AG04449 (cell line): ENCODE measurements at regions of chr2 and their contacts with region 1.

Region 1: GRCh38 chr2:239143858-239144718 is 256.7 kb downstream of the HDAC4 start:
- DNase-seq: no peak
- H3K4me3 ChIP-seq: no peak overlapping the region
- CTCF ChIP-seq: peak; percentile 84

Region 2: GRCh38 chr2:239025096-239025801 is 118.8 kb before region 1 on chr2:
- CTCF ChIA-PET with region 1: no interaction called
- POLR2A ChIA-PET with region 1: no interaction called
- DNase-seq: peak; percentile 9
- H3K4me3 ChIP-seq: no peak overlapping the region
- CTCF ChIP-seq: no peak

Region 3: GRCh38 chr2:239098288-239098970 is 45.7 kb before region 1 on chr2:
- CTCF ChIA-PET with region 1: no interaction called
- POLR2A ChIA-PET with region 1: no interaction called
- DNase-seq: no peak
- H3K4me3 ChIP-seq: no peak overlapping the region
- CTCF ChIP-seq: no peak

Region 4: GRCh38 chr2:239131521-239131920 is 12.6 kb before region 1 on chr2:
- CTCF ChIA-PET with region 1: interaction called, 16 read pairs
- POLR2A ChIA-PET with region 1: no interaction called
- DNase-seq: no peak
- H3K4me3 ChIP-seq: no peak overlapping the region
- CTCF ChIP-seq: no peak

Region 5: GRCh38 chr2:239399111-239399920 is 255.2 kb after region 1 on chr2:
- CTCF ChIA-PET with region 1: interaction called, 15 read pairs
- POLR2A ChIA-PET with region 1: no interaction called
- DNase-seq: no peak
- H3K4me3 ChIP-seq: peak overlapping the region; percentile 54
- CTCF ChIP-seq: no peak